Transverse colon (tissue), 4 donors: ENCODE measurements at regions of chr9 and their contacts with region 1.

Region 1: GRCh38 chr9:129796029-129796910 is 6.7 kb upstream of the TOR1B start:
- DNase-seq: no peak
- H3K4me3 ChIP-seq: no peak overlapping the region
- H3K27ac ChIP-seq: no peak overlapping the region
- H3K4me1 ChIP-seq: no peaks in the 10 kb centered on the region
- H3K27me3 ChIP-seq: peaks cover 12% of the 10 kb centered on the region
- CTCF ChIP-seq: no peak
- EP300 ChIP-seq: no peak
- POLR2A ChIP-seq: no peak

Region 2: GRCh38 chr9:129641746-129642513 is 154.3 kb before region 1 on chr9 and contains the start of gene ASB6:
- in situ Hi-C with region 1: no loop called
- intact Hi-C with region 1: loop called (anchors 10 kb)
- DNase-seq: peak; percentile 98
- H3K4me3 ChIP-seq: peak within 1 kb of the TSS; percentile 86 to 97 (median 89)
- H3K27ac ChIP-seq: peak within 1 kb of the TSS; percentile 85 to 89 (median 87)
- H3K4me1 ChIP-seq: peaks cover 12 to 23% (median 17%) of the 10 kb centered on the region in 4 donors
- H3K27me3 ChIP-seq: no peaks in the 10 kb centered on the region
- CTCF ChIP-seq: peak; percentile 96 to 100 (median 99)
- EP300 ChIP-seq: no peak
- POLR2A ChIP-seq: peak; percentile 67
- total RNA-seq, gene ASB6: 21.8 to 54.2 (median 29.6) TPM

Region 3: DNA sequence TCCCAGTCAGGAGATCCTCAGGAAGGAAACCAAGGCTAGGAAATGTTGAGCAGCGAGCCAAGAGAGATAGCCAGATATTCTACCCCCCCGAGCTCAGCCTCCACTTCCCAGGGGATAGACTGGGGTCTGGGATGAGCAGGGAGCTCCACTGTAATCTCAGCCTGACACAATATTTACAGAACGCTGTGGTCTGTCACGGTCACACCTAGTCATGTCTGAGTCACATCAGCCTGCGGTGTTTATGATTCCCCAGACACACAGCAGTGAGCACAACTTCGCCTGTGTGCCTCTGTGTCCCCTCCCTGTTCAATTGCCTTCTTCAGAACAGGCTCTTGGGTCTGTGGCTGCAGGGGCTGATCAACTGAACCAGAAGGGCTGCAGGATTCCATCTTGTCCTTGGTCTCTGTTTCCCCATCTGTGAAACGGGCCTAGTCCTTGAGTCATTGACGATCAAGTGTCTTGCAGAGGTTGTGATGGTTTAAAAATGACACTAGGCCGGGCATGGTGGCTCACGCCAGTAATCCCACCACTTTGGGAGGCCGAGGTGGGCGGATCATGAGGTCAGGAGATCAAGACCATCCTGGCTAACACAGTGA is 139.4 kb before region 1 on chr9:
- in situ Hi-C with region 1: no loop called
- intact Hi-C with region 1: no loop called
- DNase-seq: no peak
- H3K4me3 ChIP-seq: no peak overlapping the region
- H3K27ac ChIP-seq: no peak overlapping the region
- H3K4me1 ChIP-seq: peaks cover 0 to 6% (median 0%) of the 10 kb centered on the region in 4 donors
- H3K27me3 ChIP-seq: peaks cover 17% of the 10 kb centered on the region
- CTCF ChIP-seq: no peak
- EP300 ChIP-seq: no peak
- POLR2A ChIP-seq: no peak